PC-9 (cell line): ENCODE measurements at regions of chr16 and their contacts with region 1.

Region 1: DNA sequence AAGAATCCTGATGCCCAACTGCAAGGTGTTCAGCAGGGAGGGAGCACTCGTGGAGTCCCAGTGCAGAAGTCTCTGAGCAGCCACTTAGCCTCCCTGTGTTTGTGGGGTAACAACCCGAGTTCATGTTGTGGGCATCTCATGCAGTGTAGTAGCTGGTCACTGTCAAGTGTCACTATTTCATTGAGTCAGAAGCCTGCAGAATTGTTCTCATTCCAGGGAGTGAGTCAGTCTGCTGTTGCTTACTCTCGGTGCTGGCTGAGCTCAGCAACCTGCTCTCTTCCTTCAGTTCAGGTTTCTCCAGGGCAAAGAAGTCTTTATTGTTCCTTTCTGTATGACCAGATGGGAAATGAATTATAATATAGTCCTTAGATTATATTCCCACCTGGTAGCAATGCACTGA is 24.1 kb downstream of the HMOX2 start:
- DNase-seq: peak; percentile 56 to 83
- H3K4me3 ChIP-seq: no peak overlapping the region
- H3K27ac ChIP-seq: peak overlapping the region; percentile 67
- H3K4me1 ChIP-seq: peaks cover 58% of the 10 kb centered on the region
- H3K27me3 ChIP-seq: no peaks in the 10 kb centered on the region
- CTCF ChIP-seq: no peak

Region 2: DNA sequence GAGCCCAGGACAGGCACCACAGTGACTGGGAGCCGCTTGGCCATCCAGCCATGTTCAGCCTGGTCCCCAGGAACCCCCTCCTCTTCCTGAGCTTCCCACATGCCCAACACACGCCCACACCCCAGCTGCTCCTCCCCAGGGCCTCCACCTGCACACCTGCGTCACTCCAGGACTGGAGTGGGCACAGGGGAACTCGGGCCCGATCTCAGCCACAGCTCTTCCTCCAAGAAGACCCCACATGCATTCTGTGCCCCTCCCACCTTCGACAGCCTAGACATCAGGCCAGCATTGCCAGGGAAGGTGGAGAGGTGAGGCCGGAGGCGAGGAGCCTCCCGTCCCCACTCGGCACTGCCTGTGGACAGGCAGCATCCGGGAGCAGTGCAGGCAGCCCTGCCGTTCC is 134.7 kb before region 1 on chr16:
- CTCF ChIA-PET with region 1: interaction called, 13 read pairs
- POLR2A ChIA-PET with region 1: no interaction called
- intact Hi-C with region 1: no loop called
- DNase-seq: no peak
- H3K4me3 ChIP-seq: no peak overlapping the region
- H3K27ac ChIP-seq: no peak overlapping the region
- H3K4me1 ChIP-seq: peaks cover 43% of the 10 kb centered on the region
- H3K27me3 ChIP-seq: no peaks in the 10 kb centered on the region
- CTCF ChIP-seq: no peak

Region 3: GRCh38 chr16:4475880-4476788 is 24.1 kb before region 1 on chr16 and contains the start of gene HMOX2:
- CTCF ChIA-PET with region 1: interaction called, 6 read pairs
- POLR2A ChIA-PET with region 1: interaction called, 9 read pairs
- intact Hi-C with region 1: loop called (anchors 1 kb)
- DNase-seq: peak; percentile 86 to 99
- H3K4me3 ChIP-seq: peak within 1 kb of the TSS; percentile 96
- H3K27ac ChIP-seq: peak within 1 kb of the TSS; percentile 71
- H3K4me1 ChIP-seq: peaks cover 27% of the 10 kb centered on the region
- H3K27me3 ChIP-seq: no peaks in the 10 kb centered on the region
- CTCF ChIP-seq: no peak; the same call in 1 of the 2 replicates
- total RNA-seq, gene HMOX2: 68.1 and 69.5 TPM in 2 replicates